CD4-positive, alpha-beta memory T cell (primary cell): ENCODE measurements at regions of chr14 and their contacts with region 1.

Region 1: GRCh38 chr14:67704484-67705089 is 2.9 kb downstream of the RDH12 start:
- DNase-seq: peak in 4 of 5 donors; percentile 50 to 57 (median 52)
- H3K4me3 ChIP-seq: no peak overlapping the region
- H3K4me3 Mint-ChIP-seq: no peak overlapping the region
- H3K27ac ChIP-seq: no peak overlapping the region
- H3K27ac Mint-ChIP-seq: no peak overlapping the region
- H3K4me1 ChIP-seq: no peaks in the 10 kb centered on the region
- H3K4me1 Mint-ChIP-seq: no peaks in the 10 kb centered on the region
- H3K27me3 ChIP-seq: no peaks in the 10 kb centered on the region
- H3K27me3 Mint-ChIP-seq: peaks cover 3 to 4% of the 10 kb centered on the region in 2 donors

Region 2: DNA sequence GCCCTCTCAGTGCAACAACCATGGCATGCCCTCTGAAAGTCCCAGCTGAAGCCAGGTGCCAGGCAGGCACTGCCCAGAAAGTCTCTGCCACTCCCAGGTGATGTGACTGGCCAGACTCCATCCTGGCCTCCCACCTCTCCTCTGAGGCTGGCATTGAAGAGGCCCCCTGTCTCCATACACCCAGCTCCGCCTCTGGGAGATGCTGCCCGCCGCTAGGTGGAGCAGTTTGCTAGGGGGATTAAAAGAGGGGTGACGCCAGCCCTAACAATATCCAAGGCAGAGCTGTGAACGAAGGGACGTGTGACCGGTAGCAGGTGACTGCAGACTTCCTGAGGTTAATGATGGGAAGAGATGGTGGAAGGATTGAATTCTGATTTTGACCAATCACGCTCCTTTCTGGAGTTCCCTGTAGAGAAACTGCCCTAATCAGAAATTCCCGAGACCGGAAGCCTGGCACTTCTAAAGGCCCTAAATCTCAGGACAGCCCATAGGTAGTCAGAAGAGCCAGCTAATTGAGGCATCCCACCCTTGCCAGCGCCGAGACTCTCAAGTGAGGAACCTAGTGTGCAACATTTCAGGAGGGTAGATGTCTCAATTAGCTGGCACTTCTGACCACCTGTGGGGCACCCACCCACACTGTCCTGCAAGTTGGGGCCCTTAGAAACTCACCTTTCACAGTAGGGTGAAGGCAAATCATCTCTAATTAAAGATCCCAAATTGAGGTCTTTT is 284.3 kb before region 1 on chr14:
- CTCF ChIA-PET with region 1: interaction called, 88 read pairs
- POLR2A ChIA-PET with region 1: interaction called, 3 read pairs
- intact Hi-C with region 1: loop called (anchors 1 kb)
- DNase-seq: peak in 4 of 5 donors; percentile 8 to 19 (median 11)
- H3K4me3 ChIP-seq: no peak overlapping the region
- H3K4me3 Mint-ChIP-seq: no peak overlapping the region
- H3K27ac ChIP-seq: no peak overlapping the region
- H3K27ac Mint-ChIP-seq: no peak overlapping the region
- H3K4me1 ChIP-seq: no peaks in the 10 kb centered on the region
- H3K4me1 Mint-ChIP-seq: no peaks in the 10 kb centered on the region
- H3K27me3 ChIP-seq: no peaks in the 10 kb centered on the region
- H3K27me3 Mint-ChIP-seq: peaks cover 2 to 4% of the 10 kb centered on the region in 2 donors

Region 3: DNA sequence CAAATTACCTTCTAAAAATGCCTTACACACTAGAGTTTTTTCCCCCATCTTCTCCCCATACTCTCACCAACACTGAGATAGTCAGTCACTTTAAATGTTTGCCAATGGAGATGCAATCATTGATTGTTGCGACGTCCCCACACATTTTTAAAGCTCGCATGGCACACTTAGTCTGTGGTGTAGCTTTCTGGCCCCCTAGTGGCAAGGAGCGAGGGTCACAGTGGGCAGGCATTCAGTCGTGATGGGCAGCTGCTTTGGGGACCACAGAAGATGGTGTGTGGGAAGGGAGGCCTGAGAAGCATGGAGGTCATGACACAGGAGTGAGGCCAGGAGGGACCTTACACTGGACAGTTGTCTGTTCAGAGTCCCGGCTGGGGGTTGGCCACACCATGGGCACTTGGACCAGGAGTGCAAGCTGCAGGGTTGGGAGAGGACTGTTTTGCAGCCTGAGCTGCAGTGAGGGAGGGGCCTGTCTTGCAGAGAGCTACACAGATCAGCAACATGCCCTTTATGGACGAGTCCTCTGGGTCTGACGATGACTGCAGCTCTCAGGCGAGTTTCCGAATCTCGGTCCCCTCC is 133.2 kb before region 1 on chr14:
- CTCF ChIA-PET with region 1: interaction called, 16 read pairs
- POLR2A ChIA-PET with region 1: no interaction called
- intact Hi-C with region 1: no loop called
- DNase-seq: peak; percentile 57 to 66 (median 62)
- H3K4me3 ChIP-seq: no peak overlapping the region
- H3K4me3 Mint-ChIP-seq: no peak overlapping the region
- H3K27ac ChIP-seq: no peak overlapping the region
- H3K27ac Mint-ChIP-seq: no peak overlapping the region
- H3K4me1 ChIP-seq: no peaks in the 10 kb centered on the region
- H3K4me1 Mint-ChIP-seq: peaks cover 0 to 4% (median 3%) of the 10 kb centered on the region in 4 donors
- H3K27me3 ChIP-seq: no peaks in the 10 kb centered on the region
- H3K27me3 Mint-ChIP-seq: peaks cover 5 to 11% of the 10 kb centered on the region in 2 donors

Region 4: GRCh38 chr14:67619446-67620216 is 85.0 kb before region 1 on chr14 and contains the start of gene ARG2:
- CTCF ChIA-PET with region 1: interaction called, 85 read pairs
- POLR2A ChIA-PET with region 1: interaction called, 4 read pairs
- intact Hi-C with region 1: loop called (anchors 1 kb)
- DNase-seq: peak; percentile 95 to 96 (median 95)
- H3K4me3 ChIP-seq: peak within 1 kb of the TSS; percentile 52 to 54
- H3K4me3 Mint-ChIP-seq: peak within 1 kb of the TSS; percentile 87 to 92 (median 89)
- H3K27ac ChIP-seq: peak within 1 kb of the TSS; percentile 75
- H3K27ac Mint-ChIP-seq: peak within 1 kb of the TSS; percentile 88 to 98 (median 97)
- H3K4me1 ChIP-seq: peaks cover 15% of the 10 kb centered on the region
- H3K4me1 Mint-ChIP-seq: peaks cover 7 to 25% (median 21%) of the 10 kb centered on the region in 4 donors
- H3K27me3 ChIP-seq: peaks cover 4% of the 10 kb centered on the region
- H3K27me3 Mint-ChIP-seq: peaks cover 2 to 7% of the 10 kb centered on the region in 2 donors
- total RNA-seq, gene ARG2: 0.55 TPM in 1 of 2 experiments, not detected in the other

Region 5: GRCh38 chr14:67666750-67667449 is 37.7 kb before region 1 on chr14:
- CTCF ChIA-PET with region 1: interaction called, 19 read pairs
- POLR2A ChIA-PET with region 1: no interaction called
- intact Hi-C with region 1: loop called (anchors 2 kb)
- DNase-seq: peak; percentile 42 to 45 (median 45)
- H3K4me3 ChIP-seq: no peak overlapping the region
- H3K4me3 Mint-ChIP-seq: no peak overlapping the region
- H3K27ac ChIP-seq: no peak overlapping the region
- H3K27ac Mint-ChIP-seq: peak overlapping the region; percentile 6 to 75 (median 61)
- H3K4me1 ChIP-seq: peaks cover 43% of the 10 kb centered on the region
- H3K4me1 Mint-ChIP-seq: peaks cover 32 to 66% (median 51%) of the 10 kb centered on the region in 4 donors
- H3K27me3 ChIP-seq: no peaks in the 10 kb centered on the region
- H3K27me3 Mint-ChIP-seq: no peaks in the 10 kb centered on the region